Activated naive CD4-positive, alpha-beta T cell treated with anti-CD3 and anti-CD28 coated beads for 36 hours (primary cell): ENCODE measurements at regions of chr20 and their contacts with region 1.

Region 1: GRCh38 chr20:53070706-53071392 is 98.7 kb downstream of the TSHZ2 start:
- DNase-seq: peak; percentile 80
- H3K4me3 Mint-ChIP-seq: peak overlapping the region; percentile 18
- H3K27ac Mint-ChIP-seq: peak overlapping the region; percentile 98
- H3K4me1 Mint-ChIP-seq: peaks cover 63% of the 10 kb centered on the region
- H3K27me3 Mint-ChIP-seq: no peaks in the 10 kb centered on the region

Region 2: GRCh38 chr20:52410182-52410647 is 660.6 kb before region 1 on chr20:
- CTCF ChIA-PET with region 1: no interaction called
- intact Hi-C with region 1: loop called (anchors 2 kb)
- DNase-seq: peak; percentile 54
- H3K4me3 Mint-ChIP-seq: peak overlapping the region; percentile 20
- H3K27ac Mint-ChIP-seq: peak overlapping the region; percentile 17
- H3K4me1 Mint-ChIP-seq: peaks cover 66% of the 10 kb centered on the region
- H3K27me3 Mint-ChIP-seq: no peaks in the 10 kb centered on the region

Region 3: DNA sequence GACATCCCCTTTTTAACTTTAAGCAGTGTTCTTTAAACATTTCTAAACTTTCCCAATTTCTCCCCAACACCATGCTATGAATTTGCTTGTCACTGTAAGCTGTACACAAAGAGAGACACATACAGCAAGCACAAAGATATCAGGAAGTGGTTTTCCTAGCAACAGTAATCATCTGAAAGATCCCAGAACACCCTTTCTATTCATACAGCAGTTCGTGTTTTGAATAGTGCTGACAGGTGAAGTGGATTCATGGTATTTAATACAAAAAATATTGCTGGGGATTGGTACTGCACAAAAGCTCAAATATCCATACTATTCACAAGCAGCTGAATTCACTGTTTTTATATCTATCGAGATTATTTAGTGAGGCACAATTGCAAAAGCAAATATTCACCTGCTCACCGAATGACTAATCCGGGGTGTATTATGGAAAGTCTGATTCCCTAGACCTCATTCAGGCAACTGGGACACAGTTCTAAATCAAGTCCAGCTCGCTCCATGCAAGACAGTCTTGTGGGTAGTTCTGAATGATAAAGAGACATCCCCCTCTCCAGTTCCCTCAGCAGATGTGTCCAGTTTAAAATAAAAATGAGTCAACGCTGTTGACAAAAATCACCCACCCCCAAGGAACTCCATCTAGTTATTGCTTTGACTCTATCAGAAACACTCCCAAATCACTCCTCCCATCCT is 205.8 kb before region 1 on chr20:
- CTCF ChIA-PET with region 1: no interaction called
- intact Hi-C with region 1: loop called (anchors 2 kb)
- DNase-seq: no peak
- H3K4me3 Mint-ChIP-seq: no peak overlapping the region
- H3K27ac Mint-ChIP-seq: no peak overlapping the region
- H3K4me1 Mint-ChIP-seq: peaks cover 24% of the 10 kb centered on the region
- H3K27me3 Mint-ChIP-seq: no peaks in the 10 kb centered on the region

Region 4: GRCh38 chr20:53021934-53022333 is 48.9 kb before region 1 on chr20:
- CTCF ChIA-PET with region 1: no interaction called
- intact Hi-C with region 1: loop called (anchors 1 kb)
- DNase-seq: peak; percentile 64
- H3K4me3 Mint-ChIP-seq: peak overlapping the region; percentile 29
- H3K27ac Mint-ChIP-seq: peak overlapping the region; percentile 93
- H3K4me1 Mint-ChIP-seq: peaks cover 85% of the 10 kb centered on the region
- H3K27me3 Mint-ChIP-seq: no peaks in the 10 kb centered on the region

Region 5: GRCh38 chr20:53149148-53149889 is 78.5 kb after region 1 on chr20:
- CTCF ChIA-PET with region 1: interaction called, 3 read pairs
- intact Hi-C with region 1: loop called (anchors 1 kb)
- DNase-seq: no peak
- H3K4me3 Mint-ChIP-seq: peak overlapping the region; percentile 37
- H3K27ac Mint-ChIP-seq: peak overlapping the region; percentile 73
- H3K4me1 Mint-ChIP-seq: peaks cover 77% of the 10 kb centered on the region
- H3K27me3 Mint-ChIP-seq: no peaks in the 10 kb centered on the region

Region 6: DNA sequence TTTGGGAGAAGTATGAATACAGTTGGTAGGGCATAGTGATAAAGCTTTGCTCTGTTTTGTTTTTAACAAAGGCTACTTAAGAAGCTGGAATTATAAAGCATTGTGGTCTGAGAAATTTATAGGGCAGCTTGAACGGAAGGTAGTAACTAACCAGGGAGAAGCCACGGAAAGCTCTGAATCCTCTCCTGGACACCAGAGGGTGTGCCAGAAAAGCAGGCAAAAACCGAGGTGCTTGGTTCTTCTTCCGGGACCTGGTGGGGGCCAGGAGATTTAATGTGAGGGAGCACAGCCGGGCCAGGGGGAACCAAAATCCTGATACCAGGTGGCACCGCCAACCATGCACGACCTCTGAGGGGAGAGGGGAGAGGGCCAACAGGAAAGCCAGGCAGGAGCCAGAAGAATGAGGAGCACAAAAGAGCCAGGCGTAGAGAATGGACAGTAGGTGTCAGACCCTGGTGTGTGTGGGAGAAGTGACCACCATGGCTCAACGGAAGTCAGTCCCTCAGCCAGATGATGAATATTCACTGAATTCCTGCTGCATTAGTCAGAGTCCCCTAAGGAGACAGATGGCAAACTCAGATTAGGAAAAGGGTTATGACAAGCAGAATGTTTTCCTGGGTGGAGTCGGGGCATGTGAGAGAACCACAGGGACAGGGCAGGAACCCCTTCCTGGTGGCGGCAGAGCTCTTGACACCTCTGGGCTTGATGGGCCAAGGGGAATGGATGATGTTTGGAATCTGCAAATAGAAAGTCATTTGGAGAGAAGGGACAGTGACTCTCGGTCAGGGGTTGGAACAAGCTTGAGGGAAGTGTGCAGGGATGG is 260.5 kb after region 1 on chr20:
- CTCF ChIA-PET with region 1: no interaction called
- intact Hi-C with region 1: no loop called
- DNase-seq: no peak
- H3K4me3 Mint-ChIP-seq: no peak overlapping the region
- H3K27ac Mint-ChIP-seq: no peak overlapping the region
- H3K4me1 Mint-ChIP-seq: peaks cover 3% of the 10 kb centered on the region
- H3K27me3 Mint-ChIP-seq: no peaks in the 10 kb centered on the region

Region 7: GRCh38 chr20:53487461-53488200 is 416.8 kb after region 1 on chr20:
- CTCF ChIA-PET with region 1: no interaction called
- intact Hi-C with region 1: no loop called
- DNase-seq: no peak
- H3K4me3 Mint-ChIP-seq: no peak overlapping the region
- H3K27ac Mint-ChIP-seq: no peak overlapping the region
- H3K4me1 Mint-ChIP-seq: peaks cover 29% of the 10 kb centered on the region
- H3K27me3 Mint-ChIP-seq: no peaks in the 10 kb centered on the region